Heart right ventricle (tissue), 16 donors: ENCODE measurements at regions of chr1 and their contacts with region 1.

Region 1: DNA sequence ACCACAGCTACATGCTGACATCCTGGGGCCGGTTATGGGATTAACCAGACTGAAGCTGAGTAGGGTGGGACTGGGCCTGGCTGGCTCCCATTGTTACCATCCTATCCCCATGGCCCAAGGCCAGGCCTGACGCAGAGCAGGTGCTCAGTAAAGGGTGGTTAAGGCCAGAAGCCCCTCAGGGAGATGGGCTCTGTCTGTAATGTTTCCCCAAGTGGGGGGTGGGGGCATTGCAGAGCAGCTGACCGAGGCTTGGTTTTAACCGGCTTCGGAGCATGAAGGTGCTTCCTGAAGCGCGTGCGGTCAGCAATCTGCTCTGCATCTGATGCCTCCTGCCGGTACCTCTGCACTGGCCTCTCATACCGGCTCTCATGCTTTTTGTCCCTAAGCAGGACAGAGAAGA is 83.4 kb upstream of the ACTL8 start:
- DNase-seq: no peak
- ATAC-seq: no peak
- H3K4me3 ChIP-seq: no peak overlapping the region
- H3K27ac ChIP-seq: no peak overlapping the region
- H3K4me1 ChIP-seq: peaks cover 3 to 46% (median 22%) of the 10 kb centered on the region in 9 donors
- H3K27me3 ChIP-seq: no peaks in the 10 kb centered on the region
- CTCF ChIP-seq: no peak

Region 2: GRCh38 chr1:17723684-17724083 is 51.9 kb after region 1 on chr1:
- intact Hi-C with region 1: no loop called
- DNase-seq: no peak
- ATAC-seq: no peak
- H3K4me3 ChIP-seq: no peak overlapping the region
- H3K27ac ChIP-seq: no peak overlapping the region
- H3K4me1 ChIP-seq: no peaks in the 10 kb centered on the region
- H3K27me3 ChIP-seq: peaks cover 0 to 24% (median 0%) of the 10 kb centered on the region in 7 donors
- CTCF ChIP-seq: no peak

Region 3: GRCh38 chr1:17826165-17826488 is 154.4 kb after region 1 on chr1:
- intact Hi-C with region 1: loop called in 5 of 10 experiments (anchors 5 to 10 kb)
- DNase-seq: peak in 1 of 2 donors; percentile 57
- ATAC-seq: peak in 7 of 8 donors; percentile 19 to 45 (median 30)
- H3K4me3 ChIP-seq: no peak overlapping the region
- H3K27ac ChIP-seq: no peak overlapping the region
- H3K4me1 ChIP-seq: peaks cover 0 to 17% (median 0%) of the 10 kb centered on the region in 9 donors
- H3K27me3 ChIP-seq: peaks cover 0 to 29% (median 7%) of the 10 kb centered on the region in 7 donors
- CTCF ChIP-seq: peak; percentile 35 to 71 (median 62)

Region 4: DNA sequence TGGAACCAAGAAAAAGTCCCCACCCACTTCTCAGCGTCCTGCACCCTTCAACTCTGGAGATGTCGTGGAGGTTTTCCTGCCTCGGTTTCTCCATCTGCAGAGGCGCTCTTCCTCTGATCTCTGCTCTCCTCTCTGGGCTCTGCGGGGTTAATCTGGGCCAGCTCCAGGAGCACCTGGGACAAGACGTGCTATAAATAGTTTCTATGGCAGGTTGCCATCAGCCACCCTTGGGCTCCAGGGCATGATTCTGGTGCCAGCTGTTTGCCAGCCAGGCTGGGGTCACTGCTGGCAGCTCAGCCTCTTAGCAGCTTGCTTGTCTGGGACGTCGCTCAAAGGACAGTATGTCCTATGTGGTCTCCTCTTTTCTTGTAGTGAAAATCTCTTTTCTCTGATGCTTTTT is 220.5 kb after region 1 on chr1:
- intact Hi-C with region 1: loop called in 2 of 10 experiments (anchors 10 kb)
- DNase-seq: peak; percentile 70 to 77
- ATAC-seq: peak; percentile 66 to 92 (median 84)
- H3K4me3 ChIP-seq: no peak overlapping the region
- H3K27ac ChIP-seq: peak overlapping the region in 8 of 10 donors; percentile 52 to 84 (median 75)
- H3K4me1 ChIP-seq: peaks cover 0 to 36% (median 17%) of the 10 kb centered on the region in 9 donors
- H3K27me3 ChIP-seq: peaks cover 0 to 11% (median 4%) of the 10 kb centered on the region in 7 donors
- CTCF ChIP-seq: no peak

Region 5: GRCh38 chr1:18009478-18009961 is 337.8 kb after region 1 on chr1:
- intact Hi-C with region 1: no loop called
- DNase-seq: no peak
- ATAC-seq: no peak
- H3K4me3 ChIP-seq: no peak overlapping the region
- H3K27ac ChIP-seq: no peak overlapping the region
- H3K4me1 ChIP-seq: no peaks in the 10 kb centered on the region
- H3K27me3 ChIP-seq: peaks cover 0 to 84% (median 60%) of the 10 kb centered on the region in 7 donors
- CTCF ChIP-seq: no peak

Region 6: GRCh38 chr1:18134324-18135046 is 462.7 kb after region 1 on chr1:
- intact Hi-C with region 1: no loop called
- DNase-seq: no peak
- ATAC-seq: no peak
- H3K4me3 ChIP-seq: no peak overlapping the region
- H3K27ac ChIP-seq: no peak overlapping the region
- H3K4me1 ChIP-seq: no peaks in the 10 kb centered on the region
- H3K27me3 ChIP-seq: peaks cover 0 to 65% (median 42%) of the 10 kb centered on the region in 7 donors
- CTCF ChIP-seq: no peak

Region 7: DNA sequence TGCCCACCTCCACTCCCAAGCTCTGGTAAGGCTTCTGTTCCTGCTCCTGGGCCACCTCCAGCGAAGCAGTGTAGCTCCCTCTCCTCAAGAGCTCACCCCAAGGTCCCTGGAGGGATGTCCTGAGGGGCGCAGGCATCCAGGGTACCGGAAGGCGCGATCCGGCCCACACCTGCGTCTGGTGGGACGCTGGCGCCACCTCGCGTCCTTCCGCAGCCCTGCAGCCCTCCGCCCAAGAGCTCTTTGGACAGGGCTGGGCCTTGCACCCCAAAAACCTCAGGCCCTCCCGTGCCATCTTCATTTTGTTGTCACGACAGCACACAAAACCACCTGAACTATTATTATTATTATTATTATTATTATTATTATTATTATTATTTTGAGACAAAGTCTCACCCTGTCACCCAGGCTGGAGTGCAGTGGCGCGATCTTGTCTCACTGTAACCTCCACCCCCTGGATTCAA is 909.7 kb after region 1 on chr1:
- intact Hi-C with region 1: loop called in 2 of 10 experiments (anchors 5 to 10 kb)
- DNase-seq: peak in 1 of 2 donors; percentile 23
- ATAC-seq: peak in 3 of 8 donors; percentile 34 to 47 (median 45)
- H3K4me3 ChIP-seq: no peak overlapping the region
- H3K27ac ChIP-seq: no peak overlapping the region
- H3K4me1 ChIP-seq: peaks cover 0 to 15% (median 0%) of the 10 kb centered on the region in 9 donors
- H3K27me3 ChIP-seq: peaks cover 0 to 29% (median 19%) of the 10 kb centered on the region in 7 donors
- CTCF ChIP-seq: peak; percentile 27 to 75 (median 66)